Cardiac septum (tissue), 1 donor: ENCODE measurements at regions of chr2 and their contacts with region 1.

Region 1: GRCh38 chr2:30979822-30980245 is 158.4 kb downstream of the GALNT14 start:
- DNase-seq: no peak

Region 2: GRCh38 chr2:30404319-30404953 is 575.4 kb before region 1 on chr2:
- intact Hi-C with region 1: no loop called
- DNase-seq: no peak

Region 3: GRCh38 chr2:30894498-30895119 is 85.2 kb before region 1 on chr2:
- intact Hi-C with region 1: no loop called
- DNase-seq: no peak

Region 4: GRCh38 chr2:30936977-30937376 is 42.9 kb before region 1 on chr2:
- intact Hi-C with region 1: loop called (anchors 5 kb)
- DNase-seq: no peak

Region 5: GRCh38 chr2:30947686-30948085 is 32.1 kb before region 1 on chr2:
- intact Hi-C with region 1: no loop called
- DNase-seq: no peak

Region 6: GRCh38 chr2:31138037-31138962 is 158.5 kb after region 1 on chr2 and contains the start of gene GALNT14:
- intact Hi-C with region 1: loop called (anchors 10 kb)
- DNase-seq: peak; percentile 87
- total RNA-seq, gene GALNT14: 0.48 TPM